HAP-1 (cell line): ENCODE measurements at regions of chr12 and their contacts with region 1.

Region 1: DNA sequence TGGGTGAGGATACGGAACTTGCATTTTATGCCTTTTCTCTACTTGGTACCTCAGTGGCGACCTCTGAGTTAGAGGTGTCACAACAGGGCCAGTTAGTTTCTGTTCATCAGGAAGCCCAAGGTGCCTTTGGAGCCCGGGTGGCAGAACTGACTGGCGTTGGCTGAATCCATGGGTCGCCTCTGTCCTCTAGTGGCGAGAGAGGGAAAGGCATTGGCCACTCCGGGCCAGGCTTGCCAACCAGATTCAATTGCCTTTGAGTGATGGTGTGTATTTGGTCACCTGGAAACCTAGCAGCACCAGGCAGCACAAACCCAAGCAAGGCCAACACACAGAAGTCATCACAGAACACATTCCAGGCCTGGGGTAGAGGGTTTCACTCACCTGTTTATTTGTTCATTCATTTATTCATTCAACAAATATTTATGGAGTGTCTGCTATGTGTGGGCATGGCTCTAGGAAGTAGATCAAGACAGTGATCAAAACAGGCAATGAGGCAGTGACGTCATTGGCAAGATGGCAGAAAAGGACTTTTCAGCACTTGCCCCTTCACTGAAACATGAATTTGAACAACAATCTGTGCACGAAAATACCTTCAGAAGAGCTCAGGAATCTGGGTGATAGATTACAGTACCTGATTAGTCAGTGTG is 40.5 kb upstream of the KCNA5 start:
- DNase-seq: peak; percentile 24 to 77
- H3K4me3 ChIP-seq: no peak overlapping the region
- H3K4me1 ChIP-seq: no peaks in the 10 kb centered on the region
- H3K27me3 ChIP-seq: no peaks in the 10 kb centered on the region

Region 2: DNA sequence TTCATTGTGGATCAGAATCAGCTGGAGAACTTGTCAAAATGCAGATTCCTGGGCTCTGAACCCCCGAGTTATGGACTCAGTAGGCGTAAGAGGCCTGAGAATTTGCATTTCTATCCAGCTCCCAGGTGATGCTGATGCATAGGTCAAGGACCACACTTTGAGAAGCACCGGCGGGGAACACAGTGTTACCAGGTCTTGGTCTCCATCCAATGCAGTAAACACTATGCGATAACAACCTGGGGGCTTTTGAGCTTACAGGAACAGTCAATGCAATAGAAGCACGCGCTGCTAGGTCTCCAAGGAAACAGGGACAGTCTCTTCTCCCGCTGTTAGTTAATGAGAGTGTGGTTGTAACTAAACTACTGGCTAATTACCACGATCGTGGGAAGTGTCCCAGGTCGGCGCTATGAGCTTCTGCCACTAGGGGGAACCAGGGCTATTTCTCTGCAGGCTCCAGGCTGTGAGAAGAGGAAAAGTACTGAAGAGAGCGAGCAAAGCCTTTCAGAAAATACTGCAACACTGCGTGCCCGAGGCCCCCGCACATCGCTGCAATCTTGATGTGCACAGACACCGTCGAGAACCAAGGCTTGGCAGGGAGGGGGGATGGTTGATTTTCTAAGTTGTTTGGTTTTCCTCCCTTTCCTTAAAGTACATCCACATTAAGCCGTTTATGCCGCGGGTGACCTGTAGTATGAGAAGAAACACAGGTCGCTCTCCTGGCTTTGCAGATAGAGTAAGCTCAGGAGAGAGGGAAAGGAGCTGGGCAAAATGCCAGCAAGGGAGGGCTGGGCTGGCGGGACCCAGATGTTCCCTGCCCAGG is 145.5 kb before region 1 on chr12:
- in situ Hi-C with region 1: loop called (anchors 5 kb)
- DNase-seq: peak; percentile 58 to 85
- H3K4me3 ChIP-seq: no peak overlapping the region
- H3K4me1 ChIP-seq: peaks cover 3% of the 10 kb centered on the region
- H3K27me3 ChIP-seq: peaks cover 19% of the 10 kb centered on the region

Region 3: GRCh38 chr12:5417500-5417899 is 414.4 kb after region 1 on chr12:
- in situ Hi-C with region 1: no loop called
- DNase-seq: no peak
- H3K4me3 ChIP-seq: no peak overlapping the region
- H3K4me1 ChIP-seq: no peaks in the 10 kb centered on the region
- H3K27me3 ChIP-seq: no peaks in the 10 kb centered on the region